Activated CD8-positive, alpha-beta T cell treated with anti-CD3 and anti-CD28 coated beads, Interleukin-2, amount 10 ng/mL, durations not matched to agents 7 days and 5 days (primary cell): ENCODE measurements at regions of chr17 and their contacts with region 1.

Region 1: GRCh38 chr17:75827252-75828115 is 16.7 kb downstream of the UNC13D start:
- DNase-seq: peak; percentile 77
- ATAC-seq: peak; percentile 71
- H3K4me3 Mint-ChIP-seq: peak overlapping the region; percentile 63
- H3K27ac Mint-ChIP-seq: peak overlapping the region; percentile 99
- H3K4me1 Mint-ChIP-seq: peaks cover 41% of the 10 kb centered on the region
- H3K27me3 Mint-ChIP-seq: no peaks in the 10 kb centered on the region

Region 2: GRCh38 chr17:75764711-75765421 is 62.6 kb before region 1 on chr17 and contains the start of gene GALK1:
- CTCF ChIA-PET with region 1: interaction called, 33 read pairs
- POLR2A ChIA-PET with region 1: interaction called, 4 read pairs
- DNase-seq: peak; percentile 80
- ATAC-seq: peak; percentile 94
- H3K4me3 Mint-ChIP-seq: peak within 1 kb of the TSS; percentile 79
- H3K27ac Mint-ChIP-seq: peak within 1 kb of the TSS; percentile 63
- H3K4me1 Mint-ChIP-seq: peaks cover 15% of the 10 kb centered on the region
- H3K27me3 Mint-ChIP-seq: peaks cover 6% of the 10 kb centered on the region
- total RNA-seq, gene GALK1: 52.2 to 56.9 TPM

Region 3: GRCh38 chr17:75784473-75785015 is 42.9 kb before region 1 on chr17 and contains the start of gene UNK:
- CTCF ChIA-PET with region 1: interaction called, 14 read pairs
- POLR2A ChIA-PET with region 1: interaction called, 205 read pairs
- DNase-seq: peak; percentile 98
- ATAC-seq: peak; percentile 72
- H3K4me3 Mint-ChIP-seq: peak within 1 kb of the TSS; percentile 91
- H3K27ac Mint-ChIP-seq: peak within 1 kb of the TSS; percentile 100
- H3K4me1 Mint-ChIP-seq: peaks cover 50% of the 10 kb centered on the region
- H3K27me3 Mint-ChIP-seq: peaks cover 3% of the 10 kb centered on the region
- total RNA-seq, gene UNK: 30.2 to 31.0 TPM

Region 4: GRCh38 chr17:75803883-75804282 is 23.6 kb before region 1 on chr17:
- CTCF ChIA-PET with region 1: interaction called, 23 read pairs
- POLR2A ChIA-PET with region 1: interaction called, 5 read pairs
- DNase-seq: no peak
- ATAC-seq: no peak
- H3K4me3 Mint-ChIP-seq: no peak overlapping the region
- H3K27ac Mint-ChIP-seq: no peak overlapping the region
- H3K4me1 Mint-ChIP-seq: peaks cover 11% of the 10 kb centered on the region
- H3K27me3 Mint-ChIP-seq: no peaks in the 10 kb centered on the region

Region 5: DNA sequence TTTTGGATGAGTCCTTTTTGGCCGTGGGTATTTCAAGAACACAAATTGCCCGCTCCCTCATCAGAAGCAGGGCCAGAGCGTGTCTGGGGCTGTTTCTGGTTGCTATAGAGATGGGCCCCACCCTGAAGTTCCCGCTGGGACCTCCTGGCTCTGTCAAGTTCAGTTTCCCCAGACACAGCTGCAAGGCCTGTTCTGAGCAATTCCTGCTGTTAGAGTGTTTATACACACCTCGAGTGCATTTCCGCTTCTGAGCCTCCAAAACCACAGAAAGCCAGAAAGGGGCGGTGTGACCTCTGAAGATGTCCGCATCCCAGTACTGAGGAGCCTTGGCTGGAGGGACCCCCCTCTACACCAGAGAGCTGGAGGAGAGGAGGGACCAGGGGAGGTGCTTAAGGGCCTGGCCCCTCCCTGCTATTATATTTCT is 37.0 kb after region 1 on chr17:
- CTCF ChIA-PET with region 1: interaction called, 17 read pairs
- POLR2A ChIA-PET with region 1: no interaction called
- DNase-seq: peak; percentile 74
- ATAC-seq: peak; percentile 88
- H3K4me3 Mint-ChIP-seq: peak overlapping the region; percentile 39
- H3K27ac Mint-ChIP-seq: peak overlapping the region; percentile 83
- H3K4me1 Mint-ChIP-seq: peaks cover 29% of the 10 kb centered on the region
- H3K27me3 Mint-ChIP-seq: no peaks in the 10 kb centered on the region

Region 6: GRCh38 chr17:75927286-75927922 is 99.9 kb after region 1 on chr17:
- CTCF ChIA-PET with region 1: no interaction called
- POLR2A ChIA-PET with region 1: no interaction called
- DNase-seq: no peak
- ATAC-seq: no peak
- H3K4me3 Mint-ChIP-seq: no peak overlapping the region
- H3K27ac Mint-ChIP-seq: no peak overlapping the region
- H3K4me1 Mint-ChIP-seq: no peaks in the 10 kb centered on the region
- H3K27me3 Mint-ChIP-seq: no peaks in the 10 kb centered on the region